Endothelial cell of umbilical vein (primary cell): ENCODE measurements at regions of chr6 and their contacts with region 1.

Region 1: GRCh38 chr6:44074439-44075136 is 52.7 kb downstream of the MRPL14 start:
- DNase-seq: peak; percentile 67
- H3K4me3 ChIP-seq: no peak overlapping the region
- H3K27ac ChIP-seq: no peak overlapping the region
- H3K4me1 ChIP-seq: peaks cover 11% of the 10 kb centered on the region
- H3K27me3 ChIP-seq: no peaks in the 10 kb centered on the region
- CTCF ChIP-seq: peak; percentile 87 to 93
- POLR2A ChIP-seq: no peak

Region 2: GRCh38 chr6:43608310-43608763 is 466.3 kb before region 1 on chr6:
- CTCF ChIA-PET with region 1: interaction called, 31 read pairs
- POLR2A ChIA-PET with region 1: no interaction called
- dilution Hi-C with region 1: no loop called
- intact Hi-C with region 1: loop called (anchors 1 kb)
- DNase-seq: peak; percentile 82
- H3K4me3 ChIP-seq: no peak overlapping the region
- H3K27ac ChIP-seq: no peak overlapping the region
- H3K4me1 ChIP-seq: peaks cover 2% of the 10 kb centered on the region
- H3K27me3 ChIP-seq: no peaks in the 10 kb centered on the region
- CTCF ChIP-seq: peak; percentile 84 to 89
- POLR2A ChIP-seq: no peak

Region 3: DNA sequence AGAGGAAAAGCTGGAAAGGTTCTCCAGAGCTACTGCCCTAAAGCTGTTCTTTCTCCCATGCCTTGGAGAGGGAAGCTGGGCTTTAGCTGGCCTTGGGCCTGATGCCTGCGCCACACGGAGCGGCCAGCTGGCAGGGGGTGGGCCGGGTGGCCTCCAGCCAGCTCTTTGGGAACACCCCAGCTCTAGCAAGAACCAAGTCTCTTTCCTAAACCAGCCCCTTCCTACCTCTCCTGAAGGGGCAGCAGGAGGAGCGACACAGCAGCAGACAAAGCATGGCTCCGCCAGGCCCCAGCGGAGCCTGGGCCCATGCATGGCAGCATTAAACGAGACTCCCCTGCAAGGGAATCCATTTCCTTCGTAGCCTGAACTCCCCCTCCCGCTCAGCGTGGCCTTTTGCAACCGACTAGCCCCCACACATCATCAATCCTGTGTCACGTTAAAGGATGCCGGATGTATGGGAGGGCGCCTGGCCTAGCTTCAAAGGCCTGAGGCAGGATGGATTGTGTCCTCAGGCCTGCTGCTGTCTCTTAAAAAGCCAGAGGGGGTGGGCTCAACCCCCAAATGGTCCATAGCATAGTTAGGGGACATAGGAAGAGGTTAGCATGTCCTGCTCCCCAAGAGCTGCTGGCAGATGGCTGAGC is 401.0 kb before region 1 on chr6:
- CTCF ChIA-PET with region 1: interaction called, 177 read pairs
- POLR2A ChIA-PET with region 1: no interaction called
- dilution Hi-C with region 1: no loop called
- intact Hi-C with region 1: no loop called
- DNase-seq: no peak
- H3K4me3 ChIP-seq: no peak overlapping the region
- H3K27ac ChIP-seq: no peak overlapping the region
- H3K4me1 ChIP-seq: peaks cover 3% of the 10 kb centered on the region
- H3K27me3 ChIP-seq: no peaks in the 10 kb centered on the region
- CTCF ChIP-seq: no peak
- POLR2A ChIP-seq: no peak

Region 4: GRCh38 chr6:43769526-43770416 is 304.8 kb before region 1 on chr6 and contains the start of gene VEGFA:
- CTCF ChIA-PET with region 1: interaction called, 245 read pairs
- POLR2A ChIA-PET with region 1: interaction called, 4 read pairs
- dilution Hi-C with region 1: no loop called
- intact Hi-C with region 1: loop called (anchors 1 kb)
- DNase-seq: peak; percentile 86
- H3K4me3 ChIP-seq: peak within 1 kb of the TSS; percentile 75 to 86 (median 81)
- H3K27ac ChIP-seq: peak within 1 kb of the TSS; percentile 71
- H3K4me1 ChIP-seq: peaks cover 18% of the 10 kb centered on the region
- H3K27me3 ChIP-seq: no peaks in the 10 kb centered on the region
- CTCF ChIP-seq: peak; percentile 96 to 98
- POLR2A ChIP-seq: peak; percentile 33
- total RNA-seq, gene VEGFA: 16.6 and 18.1 TPM in 2 replicates

Region 5: GRCh38 chr6:43817192-43817591 is 257.4 kb before region 1 on chr6:
- CTCF ChIA-PET with region 1: interaction called, 11 read pairs
- POLR2A ChIA-PET with region 1: no interaction called
- dilution Hi-C with region 1: no loop called
- intact Hi-C with region 1: no loop called
- DNase-seq: no peak
- H3K4me3 ChIP-seq: no peak overlapping the region
- H3K27ac ChIP-seq: no peak overlapping the region
- H3K4me1 ChIP-seq: no peaks in the 10 kb centered on the region
- H3K27me3 ChIP-seq: peaks cover 2 to 9% of the 10 kb centered on the region in 2 experiments
- CTCF ChIP-seq: peak; percentile 11 to 35
- POLR2A ChIP-seq: no peak

Region 6: DNA sequence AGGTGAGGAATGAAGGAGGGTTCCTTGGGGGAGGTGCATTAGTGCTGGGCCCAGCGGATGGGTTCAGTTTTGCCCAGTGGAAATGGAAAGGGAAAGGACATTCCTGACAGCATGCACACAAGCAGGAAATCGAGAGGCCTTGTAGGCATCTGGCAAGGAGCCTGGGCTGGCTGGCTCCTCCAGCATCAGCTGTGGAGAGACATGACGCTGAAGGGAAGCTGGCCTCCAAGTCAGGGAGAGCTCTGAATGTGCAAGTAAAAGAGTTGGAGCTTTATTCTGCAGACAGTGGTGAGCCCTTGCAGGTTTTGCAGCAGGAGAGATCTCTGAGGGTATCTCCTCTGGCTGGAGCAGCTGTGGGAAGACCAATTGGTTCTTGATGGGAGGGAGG is 101.7 kb before region 1 on chr6:
- CTCF ChIA-PET with region 1: interaction called, 16 read pairs
- POLR2A ChIA-PET with region 1: no interaction called
- dilution Hi-C with region 1: no loop called
- intact Hi-C with region 1: no loop called
- DNase-seq: peak; percentile 72
- H3K4me3 ChIP-seq: no peak overlapping the region
- H3K27ac ChIP-seq: no peak overlapping the region
- H3K4me1 ChIP-seq: peaks cover 3% of the 10 kb centered on the region
- H3K27me3 ChIP-seq: peaks cover 14 to 28% of the 10 kb centered on the region in 2 experiments
- CTCF ChIP-seq: no peak
- POLR2A ChIP-seq: no peak

Region 7: DNA sequence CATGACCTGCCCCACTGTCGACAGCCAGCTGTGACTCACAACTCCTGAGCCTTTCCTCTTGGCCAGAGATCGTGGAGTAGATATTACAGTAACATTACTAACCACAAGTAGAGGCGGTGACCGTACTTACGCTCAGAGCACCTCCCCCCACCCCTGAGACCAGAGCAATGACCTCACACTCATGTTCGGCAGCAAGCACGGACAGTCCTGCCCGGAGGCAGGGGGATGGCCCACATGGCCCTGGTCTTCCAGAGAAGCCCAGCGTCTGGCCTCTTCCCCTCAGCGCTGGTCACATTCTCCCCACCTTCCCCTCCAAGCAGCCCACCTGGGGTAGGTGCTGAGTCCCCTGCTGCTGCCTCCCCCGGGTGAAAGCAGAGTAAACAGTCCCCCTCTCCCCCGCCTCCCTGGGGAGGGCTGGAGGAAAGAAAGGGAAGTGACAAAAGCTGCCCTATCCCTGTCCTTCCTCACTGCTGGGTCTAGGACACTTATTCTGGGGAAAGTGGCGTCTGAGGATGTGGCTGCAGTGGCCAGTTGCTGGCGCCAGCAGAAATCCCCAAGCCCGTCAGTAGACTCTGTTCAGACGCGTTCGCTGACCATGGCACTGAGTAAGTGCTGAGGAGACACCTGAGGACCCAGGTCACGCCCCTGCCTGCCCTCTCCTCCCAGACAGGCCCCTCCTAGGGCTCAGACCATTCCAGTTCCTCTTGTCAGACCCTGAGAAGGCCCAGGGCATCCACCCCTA is 15.8 kb before region 1 on chr6:
- CTCF ChIA-PET with region 1: interaction called, 13 read pairs
- POLR2A ChIA-PET with region 1: no interaction called
- dilution Hi-C with region 1: no loop called
- intact Hi-C with region 1: no loop called
- DNase-seq: peak; percentile 95
- H3K4me3 ChIP-seq: no peak overlapping the region
- H3K27ac ChIP-seq: peak overlapping the region; percentile 93
- H3K4me1 ChIP-seq: peaks cover 39% of the 10 kb centered on the region
- H3K27me3 ChIP-seq: no peaks in the 10 kb centered on the region
- CTCF ChIP-seq: no peak
- POLR2A ChIP-seq: no peak

Region 8: GRCh38 chr6:44104481-44105021 is 30.0 kb after region 1 on chr6:
- CTCF ChIA-PET with region 1: no interaction called
- POLR2A ChIA-PET with region 1: no interaction called
- dilution Hi-C with region 1: no loop called
- intact Hi-C with region 1: no loop called
- DNase-seq: peak; percentile 97
- H3K4me3 ChIP-seq: no peak overlapping the region
- H3K27ac ChIP-seq: peak overlapping the region; percentile 89
- H3K4me1 ChIP-seq: peaks cover 37% of the 10 kb centered on the region
- H3K27me3 ChIP-seq: no peaks in the 10 kb centered on the region
- CTCF ChIP-seq: no peak
- POLR2A ChIP-seq: peak; percentile 84